Naive thymus-derived CD4-positive, alpha-beta T cell (primary cell): ENCODE measurements at regions of chr10 and their contacts with region 1.

Region 1: DNA sequence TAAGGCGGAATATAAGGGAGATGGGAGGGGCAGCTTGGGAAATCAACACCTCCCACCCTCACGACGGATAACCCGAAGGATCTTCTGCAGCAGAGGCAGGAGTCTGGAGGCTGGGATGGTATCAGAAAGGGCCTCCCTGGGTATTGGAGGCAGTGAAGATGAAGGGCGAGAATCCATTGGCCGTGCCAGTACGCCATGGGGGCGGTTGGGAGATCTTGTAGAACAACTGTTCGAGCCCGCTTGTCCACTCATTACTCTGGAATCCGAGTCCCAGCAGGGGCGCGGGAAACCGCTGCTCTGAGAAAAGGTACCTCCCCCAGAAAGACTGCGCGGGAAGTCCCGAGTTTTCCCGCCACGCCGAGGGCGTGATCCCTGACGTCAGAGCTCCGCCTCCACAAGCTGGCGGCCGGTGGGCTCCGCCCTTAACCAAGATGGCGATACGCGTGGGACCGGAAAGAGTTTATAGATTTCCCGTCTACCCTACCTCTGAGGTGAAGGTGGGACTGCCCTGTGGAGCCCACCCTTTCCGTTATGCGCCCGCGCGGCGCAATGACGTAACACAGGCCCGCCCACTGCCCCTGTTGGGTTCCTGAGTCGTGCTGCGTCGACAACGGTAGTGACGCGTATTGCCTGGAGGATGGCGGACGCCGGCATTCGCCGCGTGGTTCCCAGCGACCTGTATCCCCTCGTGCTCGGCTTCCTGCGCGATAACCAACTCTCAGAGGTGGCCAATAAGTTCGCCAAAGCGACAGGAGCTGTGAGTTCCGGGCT is at the start of gene NOLC1:
- DNase-seq: peak; percentile 95 to 100 (median 100)
- ATAC-seq: peak; percentile 97
- H3K4me3 ChIP-seq: peak within 1 kb of the TSS; percentile 87
- H3K4me3 Mint-ChIP-seq: peak within 1 kb of the TSS; percentile 91 to 98 (median 96)
- H3K27ac ChIP-seq: peak within 1 kb of the TSS; percentile 94
- H3K27ac Mint-ChIP-seq: peak within 1 kb of the TSS; percentile 91 to 98 (median 96)
- H3K4me1 ChIP-seq: peaks cover 11 to 16% of the 10 kb centered on the region in 2 donors
- H3K4me1 Mint-ChIP-seq: peaks cover 28 to 58% (median 43%) of the 10 kb centered on the region in 7 donors
- H3K27me3 ChIP-seq: no peaks in the 10 kb centered on the region
- H3K27me3 Mint-ChIP-seq: peaks cover 0 to 4% (median 0%) of the 10 kb centered on the region in 5 donors
- total RNA-seq, gene NOLC1: 45.1 to 98.5 (median 58.8) TPM

Region 2: DNA sequence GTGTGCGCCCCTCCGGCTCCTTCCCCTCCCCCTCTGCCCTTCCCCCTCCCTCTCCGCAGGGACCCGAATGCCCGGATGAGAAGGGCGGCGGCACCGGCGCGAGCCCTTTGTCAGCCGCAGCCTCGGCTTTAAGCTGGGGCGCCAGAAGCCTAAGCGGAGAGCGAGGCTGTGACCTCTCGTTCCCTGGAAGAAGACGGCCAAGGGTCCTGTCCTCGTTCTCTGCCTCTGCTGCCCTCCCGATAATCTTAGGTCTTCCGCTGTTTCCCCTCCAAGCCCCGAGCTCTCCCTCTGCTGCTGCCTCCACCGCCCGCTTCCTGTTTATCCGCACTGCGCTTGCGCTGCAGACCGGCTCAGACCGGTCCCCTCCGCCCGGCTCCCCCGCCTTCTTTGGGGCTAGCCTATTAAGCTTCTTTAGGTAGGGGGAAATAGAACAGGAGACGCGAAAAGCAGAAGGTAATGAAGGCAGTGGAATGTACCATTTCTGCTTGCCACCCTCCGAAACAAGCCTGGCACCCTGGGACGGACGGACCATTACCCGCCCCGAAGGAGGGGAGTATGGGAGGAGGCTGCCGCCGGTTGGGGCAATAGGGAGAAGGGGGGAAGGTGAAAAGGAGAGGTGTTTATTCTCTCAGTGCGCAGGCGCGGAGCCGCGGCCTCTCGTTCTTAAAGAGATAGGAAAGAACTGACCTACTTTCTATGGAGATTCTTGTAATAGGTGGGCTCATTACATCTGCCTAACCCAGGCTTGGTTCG is 333.7 kb before region 1 on chr10 and contains the start of gene OGA:
- CTCF ChIA-PET with region 1: no interaction called
- POLR2A ChIA-PET with region 1: interaction called, 6 read pairs
- intact Hi-C with region 1: loop called (anchors 1 to 2 kb)
- DNase-seq: peak; percentile 90 to 100 (median 99)
- ATAC-seq: peak; percentile 97
- H3K4me3 ChIP-seq: peak within 1 kb of the TSS; percentile 81
- H3K4me3 Mint-ChIP-seq: peak within 1 kb of the TSS; percentile 95 to 100 (median 97)
- H3K27ac ChIP-seq: peak within 1 kb of the TSS; percentile 82
- H3K27ac Mint-ChIP-seq: peak within 1 kb of the TSS; percentile 95 to 99 (median 98)
- H3K4me1 ChIP-seq: peaks cover 19 to 25% of the 10 kb centered on the region in 2 donors
- H3K4me1 Mint-ChIP-seq: peaks cover 34 to 57% (median 50%) of the 10 kb centered on the region in 7 donors
- H3K27me3 ChIP-seq: no peaks in the 10 kb centered on the region
- H3K27me3 Mint-ChIP-seq: peaks cover 0 to 4% (median 0%) of the 10 kb centered on the region in 5 donors
- total RNA-seq, gene OGA: 154 to 338 (median 321) TPM

Region 3: DNA sequence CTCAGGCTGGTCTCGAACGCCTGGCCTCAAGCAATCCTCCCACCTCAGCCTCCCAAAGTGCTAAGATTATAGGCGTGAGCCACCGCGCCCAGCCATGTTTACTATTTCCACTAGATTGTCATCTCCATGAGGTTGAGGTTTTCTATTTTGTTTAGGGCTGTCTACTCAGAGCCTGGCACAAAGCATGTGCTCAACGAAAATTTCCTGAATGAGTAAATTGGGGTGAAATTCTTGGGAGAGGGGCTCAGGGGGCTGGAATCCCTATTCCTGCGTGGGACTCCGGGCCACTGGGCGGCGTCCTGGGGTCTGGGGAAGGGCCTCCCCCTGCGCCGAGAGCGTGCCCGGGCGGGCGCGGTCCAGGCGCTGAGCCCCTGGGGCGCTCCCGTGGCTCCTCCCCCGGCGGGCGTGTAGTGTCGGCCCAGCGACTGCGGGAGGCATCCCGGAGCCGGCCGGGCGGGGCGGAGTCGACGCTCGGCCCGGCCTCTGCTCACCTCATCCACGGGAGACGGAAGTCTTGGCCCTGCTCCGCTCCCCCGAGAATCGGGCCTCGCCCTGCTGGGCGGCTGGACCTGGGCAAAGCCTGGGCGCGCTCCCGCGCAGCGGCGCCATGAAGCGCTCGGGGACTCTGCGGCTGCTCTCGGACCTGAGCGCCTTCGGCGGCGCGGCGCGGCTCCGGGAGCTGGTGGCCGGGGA is 86.9 kb before region 1 on chr10 and contains the start of gene HPS6:
- CTCF ChIA-PET with region 1: no interaction called
- POLR2A ChIA-PET with region 1: interaction called, 3 read pairs
- intact Hi-C with region 1: loop called (anchors 1 kb)
- DNase-seq: peak; percentile 73 to 94 (median 81)
- ATAC-seq: peak; percentile 98
- H3K4me3 ChIP-seq: peak within 1 kb of the TSS; percentile 82
- H3K4me3 Mint-ChIP-seq: peak within 1 kb of the TSS; percentile 79 to 91 (median 89)
- H3K27ac ChIP-seq: peak within 1 kb of the TSS; percentile 93
- H3K27ac Mint-ChIP-seq: peak within 1 kb of the TSS; percentile 85 to 97 (median 93)
- H3K4me1 ChIP-seq: peaks cover 14 to 23% of the 10 kb centered on the region in 2 donors
- H3K4me1 Mint-ChIP-seq: peaks cover 23 to 43% (median 36%) of the 10 kb centered on the region in 7 donors
- H3K27me3 ChIP-seq: no peaks in the 10 kb centered on the region
- H3K27me3 Mint-ChIP-seq: no peaks in the 10 kb centered on the region
- total RNA-seq, gene HPS6: 12.1 to 24.2 (median 20.9) TPM

Region 4: DNA sequence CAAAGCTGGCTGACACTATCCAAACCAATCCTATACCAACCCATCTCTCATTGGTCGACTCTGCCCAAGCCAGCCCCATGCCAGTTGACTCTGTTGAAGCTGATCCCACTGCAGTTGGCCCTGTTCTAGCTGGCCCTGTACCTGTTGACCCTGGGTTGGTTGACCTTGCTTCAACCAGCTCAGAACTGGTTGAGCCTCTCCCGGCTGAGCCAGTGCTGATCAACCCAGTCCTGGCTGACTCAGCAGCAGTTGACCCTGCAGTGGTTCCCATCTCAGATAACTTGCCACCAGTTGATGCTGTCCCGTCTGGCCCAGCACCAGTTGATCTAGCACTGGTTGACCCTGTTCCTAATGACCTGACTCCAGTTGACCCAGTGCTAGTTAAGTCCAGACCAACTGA is 11.8 kb before region 1 on chr10:
- CTCF ChIA-PET with region 1: interaction called, 13 read pairs
- POLR2A ChIA-PET with region 1: interaction called, 9 read pairs
- intact Hi-C with region 1: no loop called
- DNase-seq: no peak
- ATAC-seq: peak; percentile 4
- H3K4me3 ChIP-seq: no peak overlapping the region
- H3K4me3 Mint-ChIP-seq: no peak overlapping the region
- H3K27ac ChIP-seq: no peak overlapping the region
- H3K27ac Mint-ChIP-seq: peak overlapping the region in 1 of 9 donors; percentile 56
- H3K4me1 ChIP-seq: peaks cover 0 to 10% of the 10 kb centered on the region in 2 donors
- H3K4me1 Mint-ChIP-seq: peaks cover 13 to 24% (median 19%) of the 10 kb centered on the region in 7 donors
- H3K27me3 ChIP-seq: no peaks in the 10 kb centered on the region
- H3K27me3 Mint-ChIP-seq: no peaks in the 10 kb centered on the region

Region 5: GRCh38 chr10:102420810-102421644 is 269.1 kb after region 1 on chr10 and contains the start of gene FBXL15:
- CTCF ChIA-PET with region 1: no interaction called
- POLR2A ChIA-PET with region 1: no interaction called
- intact Hi-C with region 1: loop called (anchors 1 to 2 kb)
- DNase-seq: peak; percentile 82 to 96 (median 90)
- ATAC-seq: peak; percentile 86
- H3K4me3 ChIP-seq: peak within 1 kb of the TSS; percentile 93
- H3K4me3 Mint-ChIP-seq: peak within 1 kb of the TSS; percentile 94 to 99 (median 98)
- H3K27ac ChIP-seq: peak within 1 kb of the TSS; percentile 75
- H3K27ac Mint-ChIP-seq: peak within 1 kb of the TSS; percentile 91 to 97 (median 95)
- H3K4me1 ChIP-seq: peaks cover 26 to 33% of the 10 kb centered on the region in 2 donors
- H3K4me1 Mint-ChIP-seq: peaks cover 17 to 46% (median 38%) of the 10 kb centered on the region in 7 donors
- H3K27me3 ChIP-seq: no peaks in the 10 kb centered on the region
- H3K27me3 Mint-ChIP-seq: peaks cover 17 to 26% (median 19%) of the 10 kb centered on the region in 5 donors
- total RNA-seq, gene FBXL15: 10.8 to 21.0 (median 14.1) TPM

Region 6: DNA sequence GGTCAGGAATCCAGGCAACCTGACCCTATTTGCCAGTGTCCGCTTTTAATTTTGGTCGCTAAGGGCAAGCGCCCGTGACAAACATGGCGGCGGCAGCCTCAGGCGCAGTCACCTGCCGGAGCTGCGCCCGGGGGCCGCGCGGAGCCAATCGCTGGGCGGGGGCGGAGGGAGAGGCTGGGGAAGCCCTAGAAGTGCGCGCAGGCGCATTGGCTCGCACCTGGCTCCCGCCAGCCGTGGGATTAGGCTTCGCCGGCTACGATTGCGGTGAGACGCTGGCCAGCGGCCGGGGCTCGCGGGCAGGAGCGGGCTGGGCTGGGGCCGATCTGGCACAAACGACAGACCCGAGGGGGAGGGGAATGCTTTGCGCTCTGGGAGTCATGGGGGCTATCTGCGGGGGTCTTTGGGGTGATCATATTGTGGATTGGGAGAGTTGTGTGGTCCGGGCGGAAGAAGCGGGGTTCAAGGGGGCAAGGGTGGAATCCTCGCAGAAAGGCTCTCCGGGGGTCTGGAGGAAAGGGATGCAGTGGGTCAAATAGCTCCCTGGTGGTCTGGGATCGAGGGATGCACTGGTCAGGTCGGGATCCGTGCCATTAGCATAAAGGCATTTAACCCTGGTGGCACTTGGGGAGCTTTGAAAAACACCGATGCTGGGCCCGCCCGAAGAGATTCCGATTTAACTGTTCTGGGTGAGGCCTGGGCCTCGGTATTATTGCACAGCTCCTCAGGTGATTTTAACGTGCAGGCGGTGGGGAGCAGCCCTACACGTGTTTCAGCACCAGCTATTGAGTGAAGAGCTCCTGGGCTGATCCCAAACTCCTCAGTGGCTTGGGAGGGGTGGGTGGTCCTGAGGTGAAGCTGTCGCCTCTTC is 309.5 kb after region 1 on chr10:
- CTCF ChIA-PET with region 1: no interaction called
- POLR2A ChIA-PET with region 1: no interaction called
- intact Hi-C with region 1: loop called in 1 of 2 experiments (anchors 5 kb)
- DNase-seq: peak; percentile 84 to 95 (median 90)
- ATAC-seq: peak; percentile 99
- H3K4me3 ChIP-seq: peak overlapping the region; percentile 93
- H3K4me3 Mint-ChIP-seq: peak overlapping the region; percentile 83 to 96 (median 92)
- H3K27ac ChIP-seq: peak overlapping the region; percentile 74
- H3K27ac Mint-ChIP-seq: peak overlapping the region; percentile 72 to 90 (median 85)
- H3K4me1 ChIP-seq: peaks cover 9 to 14% of the 10 kb centered on the region in 2 donors
- H3K4me1 Mint-ChIP-seq: peaks cover 19 to 40% (median 34%) of the 10 kb centered on the region in 7 donors
- H3K27me3 ChIP-seq: no peaks in the 10 kb centered on the region
- H3K27me3 Mint-ChIP-seq: peaks cover 0 to 2% (median 0%) of the 10 kb centered on the region in 5 donors

Region 7: DNA sequence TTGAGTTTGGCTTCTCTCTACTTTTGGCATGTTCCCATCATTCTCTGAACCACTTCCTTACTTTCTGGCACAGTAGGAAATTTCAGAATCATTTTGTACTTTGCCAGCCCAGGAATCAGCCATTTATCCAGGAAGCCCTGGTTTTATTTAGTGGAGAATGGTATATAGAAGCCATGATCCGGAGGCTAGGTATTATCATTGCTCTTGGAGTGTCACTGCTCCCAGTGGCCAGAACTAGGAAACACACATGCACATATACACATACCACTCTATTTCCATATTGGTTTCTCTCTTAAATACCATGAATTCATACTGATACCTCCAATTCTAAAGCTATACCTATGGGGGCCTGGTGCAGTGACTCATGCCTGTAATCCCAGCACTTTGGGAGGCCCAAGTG is 388.1 kb after region 1 on chr10:
- CTCF ChIA-PET with region 1: no interaction called
- POLR2A ChIA-PET with region 1: no interaction called
- intact Hi-C with region 1: no loop called
- DNase-seq: no peak
- ATAC-seq: no peak
- H3K4me3 ChIP-seq: no peak overlapping the region
- H3K4me3 Mint-ChIP-seq: no peak overlapping the region
- H3K27ac ChIP-seq: no peak overlapping the region
- H3K27ac Mint-ChIP-seq: peak overlapping the region in 1 of 9 donors; percentile 17
- H3K4me1 ChIP-seq: no peaks in the 10 kb centered on the region
- H3K4me1 Mint-ChIP-seq: peaks cover 4 to 14% (median 12%) of the 10 kb centered on the region in 7 donors
- H3K27me3 ChIP-seq: no peaks in the 10 kb centered on the region
- H3K27me3 Mint-ChIP-seq: no peaks in the 10 kb centered on the region

Region 8: GRCh38 chr10:102876747-102877153 is 724.8 kb after region 1 on chr10:
- CTCF ChIA-PET with region 1: no interaction called
- POLR2A ChIA-PET with region 1: no interaction called
- intact Hi-C with region 1: no loop called
- DNase-seq: no peak
- ATAC-seq: no peak
- H3K4me3 ChIP-seq: no peak overlapping the region
- H3K4me3 Mint-ChIP-seq: no peak overlapping the region
- H3K27ac ChIP-seq: no peak overlapping the region
- H3K27ac Mint-ChIP-seq: no peak overlapping the region
- H3K4me1 ChIP-seq: no peaks in the 10 kb centered on the region
- H3K4me1 Mint-ChIP-seq: no peaks in the 10 kb centered on the region
- H3K27me3 ChIP-seq: no peaks in the 10 kb centered on the region
- H3K27me3 Mint-ChIP-seq: peaks cover 0 to 7% (median 0%) of the 10 kb centered on the region in 5 donors

Region 9: DNA sequence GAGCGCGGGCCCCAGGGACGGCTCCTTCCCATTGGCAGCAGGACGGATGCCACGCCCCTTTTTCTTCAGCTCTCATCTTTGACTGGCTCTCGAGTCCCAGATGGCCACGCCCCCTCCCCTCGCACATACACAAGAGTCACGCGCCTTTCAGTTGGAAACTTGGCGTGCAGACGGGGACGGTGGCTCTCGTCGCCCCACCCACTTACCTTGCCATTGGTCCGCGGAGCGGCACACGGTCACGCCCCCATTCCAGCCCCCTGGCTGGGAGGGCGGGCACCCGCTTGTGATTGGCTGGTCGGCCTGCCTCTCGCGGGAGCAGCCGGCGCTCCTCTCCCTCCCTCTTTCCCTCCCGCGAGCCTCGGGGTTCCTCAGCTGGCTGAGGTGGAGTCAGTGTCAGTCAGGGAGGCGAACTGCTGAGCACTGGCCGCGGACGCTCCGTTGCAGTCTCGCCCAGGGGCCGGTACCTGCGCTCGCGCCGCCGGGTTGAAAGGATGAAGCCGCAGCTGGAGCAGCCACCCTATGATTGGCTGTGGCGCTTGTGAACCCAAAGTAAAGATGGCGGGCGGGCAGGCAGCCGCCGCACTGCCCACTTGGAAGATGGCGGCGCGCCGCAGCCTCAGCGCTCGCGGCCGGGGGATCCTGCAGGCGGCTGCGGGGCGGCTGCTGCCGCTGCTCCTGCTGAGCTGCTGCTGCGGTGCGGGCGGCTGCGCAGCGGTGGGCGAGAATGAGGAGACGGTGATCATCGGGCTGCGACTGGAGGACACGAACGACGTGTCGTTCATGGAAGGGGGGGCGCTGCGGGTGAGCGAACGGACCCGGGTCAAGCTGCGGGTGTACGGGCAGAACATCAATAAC is 766.2 kb after region 1 on chr10 and contains the start of gene CNNM2:
- CTCF ChIA-PET with region 1: no interaction called
- POLR2A ChIA-PET with region 1: interaction called, 4 read pairs
- intact Hi-C with region 1: loop called in 1 of 2 experiments (anchors 1 kb)
- DNase-seq: peak; percentile 95 to 100 (median 99)
- ATAC-seq: peak; percentile 95
- H3K4me3 ChIP-seq: peak within 1 kb of the TSS; percentile 98
- H3K4me3 Mint-ChIP-seq: peak within 1 kb of the TSS; percentile 94 to 99 (median 96)
- H3K27ac ChIP-seq: peak within 1 kb of the TSS; percentile 83
- H3K27ac Mint-ChIP-seq: peak within 1 kb of the TSS; percentile 82 to 97 (median 94)
- H3K4me1 ChIP-seq: peaks cover 34 to 35% of the 10 kb centered on the region in 2 donors
- H3K4me1 Mint-ChIP-seq: peaks cover 41 to 68% (median 56%) of the 10 kb centered on the region in 7 donors
- H3K27me3 ChIP-seq: no peaks in the 10 kb centered on the region
- H3K27me3 Mint-ChIP-seq: peaks cover 0 to 14% (median 5%) of the 10 kb centered on the region in 5 donors
- total RNA-seq, gene CNNM2: 9.3 to 17.5 (median 12.0) TPM